CD4-positive, alpha-beta T cell (primary cell): ENCODE measurements at regions of chr10 and their contacts with region 1.

Region 1: GRCh38 chr10:124677749-124678556 is 66.2 kb downstream of the FAM53B start:
- DNase-seq: peak in 1 of 14 experiments; percentile 28
- ATAC-seq: peak; percentile 42
- H3K4me3 ChIP-seq: no peak overlapping the region
- H3K4me3 Mint-ChIP-seq: peak overlapping the region; percentile 63
- H3K27ac ChIP-seq: peak overlapping the region; percentile 29 to 39
- H3K27ac Mint-ChIP-seq: peak overlapping the region; percentile 87
- H3K4me1 ChIP-seq: peaks cover 94% of the 10 kb centered on the region
- H3K4me1 Mint-ChIP-seq: peaks cover 90% of the 10 kb centered on the region
- H3K27me3 ChIP-seq: no peaks in the 10 kb centered on the region
- H3K27me3 Mint-ChIP-seq: no peaks in the 10 kb centered on the region
- CTCF ChIP-seq: no peak

Region 2: DNA sequence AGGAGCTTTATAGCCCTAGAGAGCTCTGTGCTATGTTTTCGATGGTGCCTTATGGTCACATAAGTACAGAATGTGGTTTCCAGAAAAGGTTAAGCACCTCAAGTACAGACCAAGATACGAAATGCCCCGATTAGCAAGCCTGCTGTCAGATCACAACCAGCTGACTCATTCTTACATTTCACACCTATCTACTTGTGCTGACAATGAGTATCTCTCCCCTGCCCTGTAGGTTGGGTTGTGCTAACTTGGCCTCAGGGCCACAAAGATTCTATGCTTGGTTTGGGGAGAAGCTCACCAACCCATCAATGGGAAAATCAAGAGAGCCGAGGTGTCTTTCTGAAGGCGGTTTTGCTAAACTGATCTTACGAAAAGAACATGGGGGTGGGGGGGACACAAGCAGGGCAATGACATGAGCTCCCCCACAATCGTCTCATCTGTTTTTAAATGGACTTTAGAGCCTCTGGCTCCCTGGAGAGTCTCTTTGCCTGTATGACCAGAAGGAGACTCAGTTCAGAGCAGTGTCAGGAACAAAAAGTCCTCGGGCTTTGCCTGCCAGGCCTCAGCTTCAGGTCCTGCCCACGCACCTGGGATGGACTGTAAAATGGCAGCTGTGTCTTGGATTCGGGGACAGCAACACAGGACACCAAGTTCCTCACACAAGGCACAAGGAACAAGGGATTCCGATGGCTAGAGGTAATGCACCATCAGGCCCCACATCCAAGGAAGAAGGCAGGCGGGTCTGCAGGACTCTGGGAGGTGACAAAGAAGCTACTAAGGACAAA is 11.1 kb after region 1 on chr10:
- CTCF ChIA-PET with region 1: interaction called, 9 read pairs
- POLR2A ChIA-PET with region 1: interaction called, 21 read pairs
- intact Hi-C with region 1: no loop called
- DNase-seq: peak in 7 of 14 experiments; percentile 23 to 82 (median 58)
- ATAC-seq: peak; percentile 72
- H3K4me3 ChIP-seq: no peak overlapping the region
- H3K4me3 Mint-ChIP-seq: peak overlapping the region; percentile 17
- H3K27ac ChIP-seq: peak overlapping the region in 1 of 2 donors; percentile 32
- H3K27ac Mint-ChIP-seq: peak overlapping the region; percentile 78
- H3K4me1 ChIP-seq: peaks cover 85% of the 10 kb centered on the region
- H3K4me1 Mint-ChIP-seq: peaks cover 73% of the 10 kb centered on the region
- H3K27me3 ChIP-seq: no peaks in the 10 kb centered on the region
- H3K27me3 Mint-ChIP-seq: no peaks in the 10 kb centered on the region
- CTCF ChIP-seq: no peak

Region 3: DNA sequence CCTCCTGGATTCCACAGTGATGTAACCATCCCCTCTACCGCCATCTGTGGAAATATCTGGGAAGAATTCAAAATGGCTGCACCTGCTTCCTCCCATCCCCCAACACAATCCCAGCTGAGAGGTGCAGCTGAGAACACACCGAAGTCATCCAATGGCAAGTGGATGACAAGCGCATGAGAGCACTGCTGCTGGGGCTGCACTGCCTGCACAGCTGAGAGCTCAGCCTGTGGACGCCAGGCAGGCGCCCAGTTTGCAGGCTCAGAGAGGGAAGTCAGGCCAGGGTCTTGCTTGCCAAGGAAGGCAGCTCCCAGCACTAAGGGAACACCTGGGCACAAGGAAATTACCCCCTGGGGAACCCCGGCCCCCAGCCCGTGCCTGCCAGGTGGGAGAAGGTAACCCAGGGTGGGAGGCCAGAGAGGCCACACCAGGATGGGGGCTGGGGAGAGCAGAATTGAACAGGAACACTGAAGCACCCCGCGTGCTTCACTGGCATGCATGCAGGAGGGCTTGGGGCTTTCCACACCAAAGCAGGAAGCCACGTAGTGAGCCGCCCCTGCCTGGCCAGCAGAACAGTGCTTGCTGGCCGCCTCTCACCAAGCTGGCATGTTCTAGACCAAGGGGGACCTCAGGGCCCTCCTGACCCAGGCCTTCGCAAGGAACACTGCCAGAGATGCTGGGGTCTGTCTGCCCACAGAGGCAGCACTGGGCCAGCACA is 20.0 kb after region 1 on chr10:
- CTCF ChIA-PET with region 1: no interaction called
- POLR2A ChIA-PET with region 1: interaction called, 21 read pairs
- intact Hi-C with region 1: no loop called
- DNase-seq: peak in 11 of 14 experiments; percentile 32 to 81 (median 43)
- ATAC-seq: peak; percentile 59
- H3K4me3 ChIP-seq: no peak overlapping the region
- H3K4me3 Mint-ChIP-seq: peak overlapping the region; percentile 42
- H3K27ac ChIP-seq: peak overlapping the region; percentile 74 to 85
- H3K27ac Mint-ChIP-seq: peak overlapping the region; percentile 91
- H3K4me1 ChIP-seq: peaks cover 97% of the 10 kb centered on the region
- H3K4me1 Mint-ChIP-seq: peaks cover 95% of the 10 kb centered on the region
- H3K27me3 ChIP-seq: no peaks in the 10 kb centered on the region
- H3K27me3 Mint-ChIP-seq: no peaks in the 10 kb centered on the region
- CTCF ChIP-seq: no peak